ENCODE measurements at regions of chr15 and their contacts with region 1.

Region 1: DNA sequence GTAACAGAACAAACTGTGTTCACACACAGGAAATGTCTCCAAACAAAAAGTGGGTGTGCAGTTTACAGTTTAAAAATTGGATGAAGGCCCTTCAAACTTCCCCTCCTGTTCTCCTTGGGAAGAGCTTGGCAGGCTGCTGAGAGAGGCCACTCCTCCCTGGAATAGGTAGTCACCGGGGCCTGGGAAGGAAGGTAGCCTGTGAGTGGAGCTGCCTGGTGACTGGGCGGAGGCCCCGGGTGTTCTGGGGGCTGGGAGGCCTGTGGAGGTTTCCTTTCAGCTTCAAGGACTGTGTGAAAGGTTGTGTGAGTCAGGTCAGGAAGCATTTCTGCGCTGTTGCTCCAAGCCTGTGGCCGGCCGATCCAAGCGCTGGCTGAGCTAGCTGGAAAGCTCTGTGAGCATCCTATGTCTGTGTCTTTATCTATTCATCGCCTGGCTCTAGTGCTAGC is 14.1 kb downstream of the SLCO3A1 start:
- DNase-seq: no peak
- H3K4me3 ChIP-seq: no peak overlapping the region
- CTCF ChIP-seq: no peak

Region 2: GRCh38 chr15:91561371-91562100 is 306.1 kb before region 1 on chr15:
- CTCF ChIA-PET with region 1: no interaction called
- POLR2A ChIA-PET with region 1: no interaction called
- DNase-seq: peak; percentile 41
- H3K4me3 ChIP-seq: no peak overlapping the region
- CTCF ChIP-seq: no peak

Region 3: GRCh38 chr15:91887921-91888373 is 20.3 kb after region 1 on chr15:
- CTCF ChIA-PET with region 1: no interaction called
- POLR2A ChIA-PET with region 1: no interaction called
- DNase-seq: no peak
- H3K4me3 ChIP-seq: no peak overlapping the region
- CTCF ChIP-seq: no peak

Region 4: DNA sequence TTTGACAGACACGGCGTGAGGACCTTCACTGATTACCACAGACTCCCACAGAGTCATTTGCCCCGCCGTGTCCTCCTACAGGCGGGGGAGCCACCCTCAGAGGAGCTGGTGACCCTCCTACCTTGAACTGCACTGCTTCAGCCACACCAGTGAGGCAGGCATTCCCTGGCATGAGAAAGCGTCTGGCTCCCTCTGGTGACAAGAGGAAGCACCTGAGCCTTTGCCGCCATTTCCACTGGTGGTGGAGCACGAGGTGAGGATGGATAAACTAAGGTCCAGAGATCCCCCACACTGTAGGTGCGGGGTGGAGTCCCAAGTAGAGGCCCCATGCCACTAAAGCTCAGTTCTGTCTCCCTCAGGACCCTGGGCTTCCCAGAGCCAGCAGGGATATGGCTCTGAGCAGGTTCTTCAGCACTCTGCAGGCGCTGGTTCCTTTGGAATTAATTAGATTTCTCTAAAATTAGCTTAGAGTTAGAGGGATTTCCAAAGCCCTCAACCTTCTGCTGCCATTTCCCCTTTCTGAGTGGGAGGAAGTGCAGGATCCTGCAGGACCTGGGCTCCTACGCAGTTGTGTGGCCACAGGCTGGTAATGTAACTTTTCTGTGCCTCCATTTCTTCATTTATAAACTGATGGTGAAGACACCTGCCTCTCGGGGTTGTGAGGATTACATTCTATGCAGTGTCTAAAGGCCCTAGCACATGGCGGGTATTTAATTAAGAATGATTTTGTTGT is 209.9 kb after region 1 on chr15:
- CTCF ChIA-PET with region 1: interaction called, 11 read pairs
- POLR2A ChIA-PET with region 1: no interaction called
- DNase-seq: no peak
- H3K4me3 ChIP-seq: no peak overlapping the region
- CTCF ChIP-seq: peak; percentile 82